B cell (primary cell): ENCODE measurements at regions of chr11 and their contacts with region 1.

Region 1: GRCh38 chr11:34357701-34358257 is at the start of gene ABTB2:
- DNase-seq: peak; percentile 96
- ATAC-seq: peak; percentile 89
- H3K4me3 ChIP-seq: peak within 1 kb of the TSS; percentile 56 to 70 (median 66)
- H3K4me3 Mint-ChIP-seq: peak within 1 kb of the TSS; percentile 90
- H3K27ac ChIP-seq: peak within 1 kb of the TSS in 1 of 2 donors; percentile 43
- H3K27ac Mint-ChIP-seq: peak within 1 kb of the TSS; percentile 88
- H3K4me1 ChIP-seq: peaks cover 18 to 33% of the 10 kb centered on the region in 2 donors
- H3K4me1 Mint-ChIP-seq: peaks cover 28% of the 10 kb centered on the region
- H3K27me3 ChIP-seq: peaks cover 0 to 49% (median 41%) of the 10 kb centered on the region in 4 experiments
- H3K27me3 Mint-ChIP-seq: peaks cover 54% of the 10 kb centered on the region
- CTCF ChIP-seq: no peak
- total RNA-seq, gene ABTB2: 4.5 and 5.9 TPM in 2 replicates

Region 2: GRCh38 chr11:33773987-33774735 is 583.6 kb before region 1 on chr11 and contains the start of gene FBXO3:
- CTCF ChIA-PET with region 1: no interaction called
- POLR2A ChIA-PET with region 1: no interaction called
- intact Hi-C with region 1: loop called (anchors 1 kb)
- DNase-seq: peak; percentile 90
- ATAC-seq: peak; percentile 94
- H3K4me3 ChIP-seq: peak within 1 kb of the TSS; percentile 66 to 91 (median 86)
- H3K4me3 Mint-ChIP-seq: peak within 1 kb of the TSS; percentile 92
- H3K27ac ChIP-seq: peak within 1 kb of the TSS; percentile 57 to 82
- H3K27ac Mint-ChIP-seq: peak within 1 kb of the TSS; percentile 95
- H3K4me1 ChIP-seq: peaks cover 21 to 24% of the 10 kb centered on the region in 2 donors
- H3K4me1 Mint-ChIP-seq: peaks cover 40% of the 10 kb centered on the region
- H3K27me3 ChIP-seq: peaks cover 0 to 22% (median 9%) of the 10 kb centered on the region in 4 experiments
- H3K27me3 Mint-ChIP-seq: peaks cover 19% of the 10 kb centered on the region
- CTCF ChIP-seq: no peak
- total RNA-seq, gene FBXO3: 32.7 and 34.3 TPM in 2 replicates

Region 3: DNA sequence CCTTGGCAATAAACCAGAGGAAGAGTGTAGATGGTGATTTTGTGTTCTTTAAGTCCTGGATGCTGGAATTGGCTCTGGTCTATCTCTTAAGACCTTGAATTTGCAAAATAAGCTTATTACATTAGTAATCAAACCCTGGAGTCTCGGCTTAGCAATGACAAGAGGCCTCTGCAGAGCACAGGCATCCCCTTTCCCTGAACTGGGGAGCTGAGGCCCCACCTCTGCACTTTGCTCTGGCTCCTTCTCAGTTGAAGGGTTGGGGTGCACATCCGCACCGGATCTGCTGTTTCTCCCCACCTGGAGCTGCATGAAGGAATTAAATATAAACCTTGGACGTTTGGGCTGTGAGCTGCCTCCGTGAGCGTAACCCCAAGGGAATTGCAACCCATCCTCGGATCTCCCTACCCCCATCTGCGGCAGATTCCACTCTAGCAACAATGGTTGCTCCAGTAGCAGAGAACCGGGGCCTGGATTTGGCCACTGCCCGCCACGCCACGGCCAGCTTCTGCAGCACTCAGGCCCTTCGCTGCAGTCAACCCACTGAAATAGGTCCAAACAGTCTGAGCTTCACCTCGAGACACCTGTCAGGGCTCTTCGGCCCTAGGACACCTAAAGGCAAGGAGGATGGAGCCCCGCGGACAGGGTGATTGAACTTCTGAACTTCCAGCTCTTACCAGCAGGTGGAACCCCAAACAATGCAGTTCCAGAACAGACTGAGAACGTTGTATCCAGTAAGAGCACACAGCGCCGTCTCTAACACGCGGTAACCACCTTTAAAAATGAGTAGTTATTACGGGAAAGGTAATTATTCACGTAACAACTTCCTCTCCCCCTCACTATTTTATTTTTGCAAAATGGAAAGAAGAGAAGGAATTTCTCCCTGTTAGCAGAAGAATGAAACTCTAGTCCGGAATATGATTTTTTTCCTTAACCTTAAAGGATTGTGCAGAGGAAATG is 361.0 kb before region 1 on chr11:
- CTCF ChIA-PET with region 1: interaction called, 28 read pairs
- POLR2A ChIA-PET with region 1: no interaction called
- intact Hi-C with region 1: loop called (anchors 1 kb)
- DNase-seq: peak; percentile 85
- ATAC-seq: peak; percentile 98
- H3K4me3 ChIP-seq: no peak overlapping the region
- H3K4me3 Mint-ChIP-seq: peak overlapping the region; percentile 6
- H3K27ac ChIP-seq: no peak overlapping the region
- H3K27ac Mint-ChIP-seq: no peak overlapping the region
- H3K4me1 ChIP-seq: peaks cover 8 to 13% of the 10 kb centered on the region in 2 donors
- H3K4me1 Mint-ChIP-seq: peaks cover 13% of the 10 kb centered on the region
- H3K27me3 ChIP-seq: peaks cover 0 to 27% (median 13%) of the 10 kb centered on the region in 4 experiments
- H3K27me3 Mint-ChIP-seq: peaks cover 23% of the 10 kb centered on the region
- CTCF ChIP-seq: peak; percentile 85

Region 4: DNA sequence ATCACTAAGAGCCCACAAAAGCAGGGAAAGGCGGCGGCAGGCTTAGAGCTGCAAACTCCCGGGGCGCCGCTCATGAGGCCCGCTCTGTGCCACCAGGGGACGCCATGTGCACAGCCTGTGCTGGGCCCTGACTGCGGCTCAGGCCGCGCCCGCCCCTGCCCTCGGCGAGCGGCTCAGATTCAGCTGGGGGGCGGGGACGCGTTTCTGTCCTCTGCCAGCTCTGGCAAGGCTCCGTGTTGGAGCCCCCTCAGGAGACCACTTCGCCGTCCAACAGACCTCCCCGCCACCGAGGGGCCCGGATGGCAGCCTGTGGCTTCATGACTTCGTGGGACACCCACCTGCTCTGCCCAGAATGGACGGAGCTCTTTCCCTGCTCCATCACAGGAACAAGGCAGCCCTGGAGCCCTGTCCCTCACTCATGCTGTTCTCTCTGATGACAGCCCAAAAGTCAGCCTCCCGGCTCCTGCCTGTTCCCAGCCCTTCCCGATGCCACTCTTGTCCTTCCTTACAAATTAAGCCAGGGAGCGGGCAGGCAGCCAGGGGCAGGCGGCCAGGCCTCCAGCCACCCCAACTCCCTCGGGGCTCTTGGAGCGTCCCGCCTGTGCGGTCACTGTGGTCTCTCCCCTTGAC is 183.3 kb before region 1 on chr11:
- CTCF ChIA-PET with region 1: interaction called, 129 read pairs
- POLR2A ChIA-PET with region 1: interaction called, 19 read pairs
- intact Hi-C with region 1: loop called (anchors 1 kb)
- DNase-seq: peak; percentile 84
- ATAC-seq: peak; percentile 100
- H3K4me3 ChIP-seq: peak overlapping the region in 2 of 5 experiments; percentile 12 to 33
- H3K4me3 Mint-ChIP-seq: peak overlapping the region; percentile 49
- H3K27ac ChIP-seq: no peak overlapping the region
- H3K27ac Mint-ChIP-seq: no peak overlapping the region
- H3K4me1 ChIP-seq: peaks cover 0 to 11% of the 10 kb centered on the region in 2 donors
- H3K4me1 Mint-ChIP-seq: peaks cover 5% of the 10 kb centered on the region
- H3K27me3 ChIP-seq: peaks cover 0 to 11% (median 0%) of the 10 kb centered on the region in 4 experiments
- H3K27me3 Mint-ChIP-seq: no peaks in the 10 kb centered on the region
- CTCF ChIP-seq: peak; percentile 89

Region 5: DNA sequence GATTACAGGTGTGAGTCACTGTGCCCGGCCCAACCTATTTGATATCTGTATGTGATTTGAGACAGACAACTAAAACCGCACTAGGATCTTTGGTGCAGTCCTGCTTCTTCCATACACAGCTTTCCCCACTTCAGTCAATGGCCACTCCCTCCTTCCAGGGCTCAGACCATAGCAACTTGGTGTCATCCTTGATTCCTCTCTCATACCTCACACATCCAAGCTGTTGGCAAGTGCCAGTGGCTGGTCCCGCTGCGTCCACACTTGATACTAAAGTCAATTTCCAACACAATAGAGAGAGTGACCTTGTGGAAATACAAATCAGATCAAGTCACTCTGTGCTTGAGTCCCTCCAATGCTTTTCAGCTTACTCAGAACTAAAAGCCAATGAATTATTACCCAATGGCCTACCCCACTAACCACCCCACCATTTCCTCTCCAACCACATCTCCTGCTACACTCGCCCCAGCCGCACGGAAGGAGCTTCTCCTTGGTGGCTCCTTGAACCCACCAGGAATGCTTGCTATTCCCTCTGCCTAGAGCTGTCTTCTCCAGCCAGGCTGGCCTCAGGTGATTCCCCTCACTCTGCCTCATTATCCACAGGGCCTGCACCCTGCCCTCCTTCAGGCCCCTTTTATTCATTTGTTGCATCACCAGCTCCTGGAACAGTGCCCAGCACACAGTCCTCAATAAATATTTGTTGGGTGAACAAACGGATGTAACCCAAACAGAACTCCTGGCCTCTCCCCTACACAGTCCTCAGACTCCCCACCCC is 12.8 kb before region 1 on chr11:
- CTCF ChIA-PET with region 1: interaction called, 12 read pairs
- POLR2A ChIA-PET with region 1: no interaction called
- intact Hi-C with region 1: no loop called
- DNase-seq: no peak
- ATAC-seq: no peak
- H3K4me3 ChIP-seq: no peak overlapping the region
- H3K4me3 Mint-ChIP-seq: no peak overlapping the region
- H3K27ac ChIP-seq: no peak overlapping the region
- H3K27ac Mint-ChIP-seq: no peak overlapping the region
- H3K4me1 ChIP-seq: no peaks in the 10 kb centered on the region
- H3K4me1 Mint-ChIP-seq: no peaks in the 10 kb centered on the region
- H3K27me3 ChIP-seq: no peaks in the 10 kb centered on the region
- H3K27me3 Mint-ChIP-seq: no peaks in the 10 kb centered on the region
- CTCF ChIP-seq: no peak

Region 6: DNA sequence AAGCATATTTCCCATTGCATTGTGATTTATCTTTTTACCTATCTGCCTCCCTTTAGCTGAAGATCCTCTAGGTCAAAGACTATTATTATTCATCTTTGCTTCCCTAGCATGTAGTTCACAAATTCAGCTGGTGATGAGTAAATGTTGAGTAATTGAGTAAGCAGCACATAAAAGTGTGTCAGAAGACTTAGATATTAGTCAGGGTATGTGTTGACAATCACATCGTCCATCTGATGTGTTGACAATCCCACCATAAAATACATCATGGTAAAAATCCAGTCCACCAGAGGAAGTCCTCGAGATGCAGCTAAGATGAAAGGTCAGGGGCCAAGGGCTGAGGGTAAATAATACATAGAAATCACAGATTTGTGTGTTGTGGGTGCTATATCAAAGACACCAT is 22.9 kb after region 1 on chr11:
- CTCF ChIA-PET with region 1: no interaction called
- POLR2A ChIA-PET with region 1: no interaction called
- intact Hi-C with region 1: no loop called
- DNase-seq: no peak
- ATAC-seq: no peak
- H3K4me3 ChIP-seq: no peak overlapping the region
- H3K4me3 Mint-ChIP-seq: no peak overlapping the region
- H3K27ac ChIP-seq: no peak overlapping the region
- H3K27ac Mint-ChIP-seq: no peak overlapping the region
- H3K4me1 ChIP-seq: no peaks in the 10 kb centered on the region
- H3K4me1 Mint-ChIP-seq: no peaks in the 10 kb centered on the region
- H3K27me3 ChIP-seq: peaks cover 0 to 8% (median 0%) of the 10 kb centered on the region in 4 experiments
- H3K27me3 Mint-ChIP-seq: peaks cover 10% of the 10 kb centered on the region
- CTCF ChIP-seq: no peak